AG04449 (cell line): ENCODE measurements at regions of chr11 and their contacts with region 1.

Region 1: GRCh38 chr11:124812876-124813275 is 12.7 kb upstream of the MSANTD2 start:
- DNase-seq: no peak
- H3K4me3 ChIP-seq: no peak overlapping the region
- CTCF ChIP-seq: no peak

Region 2: DNA sequence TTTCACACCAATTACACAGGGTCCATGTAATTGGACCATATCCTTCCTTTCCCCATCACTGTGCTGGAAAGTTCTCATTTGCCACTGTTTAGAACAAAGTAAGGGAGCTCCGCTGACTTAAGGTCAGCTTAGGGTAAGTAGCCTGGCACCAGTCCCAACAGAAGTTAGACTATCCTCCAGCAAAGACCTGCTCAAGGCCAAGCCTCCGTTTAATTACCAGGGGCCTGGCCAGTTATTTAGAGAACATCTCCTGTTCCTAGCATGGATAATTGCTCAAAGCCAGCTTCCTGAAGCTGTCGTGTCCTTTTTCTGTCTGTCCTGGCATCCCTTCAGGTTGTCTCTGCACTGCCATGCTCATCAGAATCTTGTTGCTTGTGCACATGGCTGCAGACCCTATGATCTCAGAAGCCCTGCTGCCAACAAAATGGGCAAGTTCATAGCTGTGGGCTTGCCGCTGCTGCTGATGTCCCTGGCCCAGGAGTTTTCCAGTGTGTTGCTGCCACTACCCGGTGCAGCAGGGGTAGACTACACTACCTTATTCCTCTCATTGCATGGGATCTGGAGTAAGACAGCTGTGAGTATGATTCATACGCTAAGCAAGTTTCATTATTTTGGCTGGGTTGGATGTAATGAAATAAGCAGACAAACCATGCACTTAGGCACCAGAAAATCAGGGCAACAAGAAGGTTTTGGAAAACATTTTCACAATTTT is 235.0 kb before region 1 on chr11:
- CTCF ChIA-PET with region 1: no interaction called
- POLR2A ChIA-PET with region 1: no interaction called
- DNase-seq: no peak
- H3K4me3 ChIP-seq: no peak overlapping the region
- CTCF ChIP-seq: no peak

Region 3: DNA sequence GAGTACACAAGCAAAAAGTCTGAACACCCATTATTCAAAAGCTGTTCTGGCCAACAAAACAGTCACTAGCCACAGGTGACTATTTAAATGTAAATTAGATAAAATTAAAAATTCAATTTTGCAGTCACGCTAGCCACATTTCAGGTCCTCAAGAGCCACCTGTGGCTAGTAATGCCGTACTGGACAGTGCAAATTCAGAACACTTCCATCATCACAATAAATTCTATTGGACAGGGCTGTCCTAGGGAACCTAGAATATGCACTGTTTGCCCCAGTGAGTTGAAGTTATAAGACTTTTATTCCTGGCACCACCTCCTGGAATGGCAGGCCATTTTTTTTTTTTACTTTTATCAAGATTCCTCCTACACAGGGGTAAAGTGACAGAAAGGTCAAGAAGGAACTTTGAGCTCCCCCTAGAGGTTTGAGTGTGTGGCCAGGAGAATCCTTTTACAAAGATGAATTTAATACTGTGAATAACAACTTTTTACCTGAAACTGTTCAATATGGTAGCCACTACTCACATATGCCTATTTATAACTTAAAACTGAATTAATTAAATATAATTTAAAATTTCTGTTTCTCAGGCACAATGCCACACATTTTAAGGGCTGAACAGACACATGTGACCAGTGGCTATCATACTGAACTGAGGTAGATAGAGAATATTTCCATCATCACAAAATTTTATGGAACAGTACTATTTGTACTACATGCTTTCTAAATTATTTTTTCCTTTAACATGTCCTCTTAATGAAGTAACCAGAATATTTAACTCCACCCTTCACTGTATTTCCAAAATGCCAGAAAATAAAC is 19.2 kb before region 1 on chr11:
- CTCF ChIA-PET with region 1: interaction called, 16 read pairs
- POLR2A ChIA-PET with region 1: no interaction called
- DNase-seq: no peak
- H3K4me3 ChIP-seq: no peak overlapping the region
- CTCF ChIP-seq: peak; percentile 56